Naive thymus-derived CD4-positive, alpha-beta T cell (primary cell): ENCODE measurements at regions of chr2 and their contacts with region 1.

Region 1: GRCh38 chr2:170928824-170929685 is at the start of gene GORASP2:
- DNase-seq: peak; percentile 97 to 99 (median 98)
- ATAC-seq: peak; percentile 94
- H3K4me3 ChIP-seq: peak within 1 kb of the TSS; percentile 88
- H3K4me3 Mint-ChIP-seq: peak within 1 kb of the TSS; percentile 89 to 97 (median 95)
- H3K27ac ChIP-seq: peak within 1 kb of the TSS; percentile 87
- H3K27ac Mint-ChIP-seq: peak within 1 kb of the TSS; percentile 93 to 96 (median 95)
- H3K4me1 ChIP-seq: peaks cover 18 to 32% of the 10 kb centered on the region in 2 donors
- H3K4me1 Mint-ChIP-seq: peaks cover 24 to 56% (median 48%) of the 10 kb centered on the region in 7 donors
- H3K27me3 ChIP-seq: no peaks in the 10 kb centered on the region
- H3K27me3 Mint-ChIP-seq: no peaks in the 10 kb centered on the region
- total RNA-seq, gene GORASP2: 65.2 to 79.2 (median 73.2) TPM

Region 2: GRCh38 chr2:169573160-169573973 is 1355.7 kb before region 1 on chr2 and contains the start of gene FASTKD1:
- CTCF ChIA-PET with region 1: no interaction called
- POLR2A ChIA-PET with region 1: no interaction called
- intact Hi-C with region 1: loop called (anchors 1 to 5 kb)
- DNase-seq: peak; percentile 55 to 88 (median 76)
- ATAC-seq: peak; percentile 100
- H3K4me3 ChIP-seq: peak within 1 kb of the TSS; percentile 93
- H3K4me3 Mint-ChIP-seq: peak within 1 kb of the TSS; percentile 88 to 99 (median 94)
- H3K27ac ChIP-seq: peak within 1 kb of the TSS; percentile 80
- H3K27ac Mint-ChIP-seq: peak within 1 kb of the TSS; percentile 74 to 95 (median 91)
- H3K4me1 ChIP-seq: peaks cover 4 to 5% of the 10 kb centered on the region in 2 donors
- H3K4me1 Mint-ChIP-seq: peaks cover 14 to 32% (median 24%) of the 10 kb centered on the region in 7 donors
- H3K27me3 ChIP-seq: no peaks in the 10 kb centered on the region
- H3K27me3 Mint-ChIP-seq: peaks cover 0 to 4% (median 0%) of the 10 kb centered on the region in 5 donors
- total RNA-seq, gene FASTKD1: 13.5 to 43.5 (median 31.0) TPM

Region 3: DNA sequence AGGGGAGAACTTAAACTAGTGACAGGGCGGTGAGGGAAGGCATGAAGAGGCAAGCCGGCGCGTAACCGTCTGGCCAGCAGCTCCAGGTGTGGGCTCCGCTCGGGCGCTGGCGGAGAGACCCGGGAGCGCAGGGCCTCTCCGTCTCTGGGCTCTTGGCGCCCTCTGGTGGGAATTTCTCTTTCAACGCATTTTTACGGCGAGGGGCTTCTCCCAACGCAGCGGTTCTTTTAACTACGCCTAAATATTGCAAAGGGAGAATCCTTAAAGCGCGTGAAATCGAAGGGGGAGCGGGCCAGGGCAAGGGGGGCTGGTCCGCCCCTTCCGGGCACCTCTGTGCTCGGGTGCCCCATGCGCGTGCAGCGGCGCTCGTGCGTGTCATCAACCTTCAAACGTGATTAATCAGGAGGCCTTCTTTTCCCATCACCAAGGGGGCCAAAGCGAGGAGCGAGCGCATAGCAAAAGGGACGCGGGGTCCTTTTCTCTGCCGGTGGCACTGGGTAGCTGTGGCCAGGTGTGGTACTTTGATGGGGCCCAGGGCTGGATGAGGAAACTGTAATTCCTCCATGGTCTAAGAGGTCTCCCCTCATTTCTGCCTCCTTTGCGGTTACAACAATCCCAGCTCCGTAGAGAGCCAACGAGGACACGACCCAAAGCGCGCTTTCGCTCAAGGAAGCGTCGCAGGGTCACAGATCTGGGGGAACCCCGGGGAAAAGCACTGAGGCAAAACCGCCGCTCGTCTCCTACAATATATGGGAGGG is 113.1 kb before region 1 on chr2:
- CTCF ChIA-PET with region 1: no interaction called
- POLR2A ChIA-PET with region 1: no interaction called
- intact Hi-C with region 1: loop called in 1 of 2 experiments (anchors 2 kb)
- DNase-seq: peak in 8 of 9 donors; percentile 33 to 70 (median 58)
- ATAC-seq: peak; percentile 68
- H3K4me3 ChIP-seq: peak overlapping the region; percentile 54
- H3K4me3 Mint-ChIP-seq: peak overlapping the region; percentile 59 to 86 (median 74)
- H3K27ac ChIP-seq: no peak overlapping the region
- H3K27ac Mint-ChIP-seq: peak overlapping the region in 2 of 9 donors; percentile 56 to 79
- H3K4me1 ChIP-seq: peaks cover 37 to 48% of the 10 kb centered on the region in 2 donors
- H3K4me1 Mint-ChIP-seq: peaks cover 30 to 78% (median 56%) of the 10 kb centered on the region in 7 donors
- H3K27me3 ChIP-seq: peaks cover 30 to 44% of the 10 kb centered on the region in 2 donors
- H3K27me3 Mint-ChIP-seq: peaks cover 67 to 84% (median 73%) of the 10 kb centered on the region in 5 donors

Region 4: DNA sequence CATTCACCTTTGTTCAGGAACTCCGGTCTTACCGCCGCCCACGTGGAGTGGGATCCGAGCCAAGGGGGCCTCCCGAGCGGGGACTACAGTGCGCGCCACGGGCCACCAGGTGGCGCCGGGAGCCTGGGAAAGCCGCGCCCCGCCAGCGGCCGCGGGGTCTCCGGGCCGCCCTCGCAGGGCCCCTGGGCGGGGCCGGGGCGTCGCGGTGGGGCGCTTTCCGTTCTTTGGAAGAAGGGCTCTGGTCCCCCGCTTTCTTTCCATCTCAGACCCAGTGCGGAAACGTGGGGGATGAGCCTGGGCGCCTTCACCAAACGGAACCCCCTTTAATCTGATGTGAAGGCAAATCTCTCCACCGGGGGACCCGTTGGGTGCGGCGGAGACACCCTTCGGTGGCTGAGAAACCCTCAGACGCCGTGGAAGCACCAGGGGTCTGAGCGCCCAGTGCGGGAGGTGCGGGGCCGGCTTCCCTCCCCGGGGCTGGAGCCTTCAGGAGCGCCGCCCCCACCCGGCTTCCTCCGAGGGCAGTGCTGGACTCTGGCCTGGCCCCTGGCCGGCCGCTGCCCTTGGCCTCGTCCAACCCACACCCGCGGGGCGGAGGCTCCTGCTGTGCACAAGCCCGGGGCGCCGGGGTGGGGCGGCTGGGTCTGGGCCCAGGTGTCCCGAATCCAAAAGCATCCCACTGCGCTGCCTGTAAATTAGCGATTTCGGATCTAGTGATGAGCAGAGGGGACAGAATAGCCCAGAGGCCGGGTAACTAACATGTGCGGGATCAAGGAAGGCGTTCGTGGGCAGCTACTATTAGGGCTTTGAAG is 44.6 kb after region 1 on chr2:
- CTCF ChIA-PET with region 1: interaction called, 6 read pairs
- POLR2A ChIA-PET with region 1: interaction called, 7 read pairs
- intact Hi-C with region 1: loop called (anchors 1 kb)
- DNase-seq: peak; percentile 86 to 96 (median 91)
- ATAC-seq: peak; percentile 99
- H3K4me3 ChIP-seq: peak overlapping the region; percentile 84
- H3K4me3 Mint-ChIP-seq: peak overlapping the region; percentile 51 to 87 (median 84)
- H3K27ac ChIP-seq: peak overlapping the region; percentile 67
- H3K27ac Mint-ChIP-seq: peak overlapping the region; percentile 33 to 90 (median 79)
- H3K4me1 ChIP-seq: peaks cover 4 to 11% of the 10 kb centered on the region in 2 donors
- H3K4me1 Mint-ChIP-seq: peaks cover 5 to 20% (median 10%) of the 10 kb centered on the region in 7 donors
- H3K27me3 ChIP-seq: no peaks in the 10 kb centered on the region
- H3K27me3 Mint-ChIP-seq: no peaks in the 10 kb centered on the region

Region 5: GRCh38 chr2:171433763-171434670 is 505.0 kb after region 1 on chr2 and contains the starts of genes DCAF17 and METTL8:
- CTCF ChIA-PET with region 1: interaction called, 8 read pairs
- POLR2A ChIA-PET with region 1: interaction called, 20 read pairs
- intact Hi-C with region 1: loop called (anchors 1 kb)
- DNase-seq: peak; percentile 84 to 93 (median 91)
- ATAC-seq: peak; percentile 95
- H3K4me3 ChIP-seq: peak within 1 kb of the TSS; percentile 87
- H3K4me3 Mint-ChIP-seq: peak within 1 kb of the TSS; percentile 82 to 97 (median 90)
- H3K27ac ChIP-seq: peak within 1 kb of the TSS; percentile 92
- H3K27ac Mint-ChIP-seq: peak within 1 kb of the TSS; percentile 84 to 98 (median 95)
- H3K4me1 ChIP-seq: peaks cover 15 to 28% of the 10 kb centered on the region in 2 donors
- H3K4me1 Mint-ChIP-seq: peaks cover 30 to 56% (median 51%) of the 10 kb centered on the region in 7 donors
- H3K27me3 ChIP-seq: no peaks in the 10 kb centered on the region
- H3K27me3 Mint-ChIP-seq: no peaks in the 10 kb centered on the region
- total RNA-seq, gene DCAF17: 19.0 to 40.3 (median 23.7) TPM
- total RNA-seq, gene METTL8: 11.8 to 21.6 (median 14.8) TPM

Region 6: GRCh38 chr2:172102391-172103278 is 1173.6 kb after region 1 on chr2 and contains the start of gene DLX2:
- CTCF ChIA-PET with region 1: no interaction called
- POLR2A ChIA-PET with region 1: no interaction called
- intact Hi-C with region 1: loop called in 1 of 2 experiments (anchors 1 kb)
- DNase-seq: peak in 5 of 9 donors; percentile 23 to 43 (median 32)
- ATAC-seq: peak; percentile 61
- H3K4me3 ChIP-seq: peak within 1 kb of the TSS; percentile 32
- H3K4me3 Mint-ChIP-seq: peak within 1 kb of the TSS; percentile 74 to 88 (median 82)
- H3K27ac ChIP-seq: no peak within 1 kb of the TSS
- H3K27ac Mint-ChIP-seq: peak within 1 kb of the TSS in 8 of 9 donors; percentile 11 to 89 (median 80)
- H3K4me1 ChIP-seq: peaks cover 41 to 62% of the 10 kb centered on the region in 2 donors
- H3K4me1 Mint-ChIP-seq: peaks cover 29 to 59% (median 49%) of the 10 kb centered on the region in 7 donors
- H3K27me3 ChIP-seq: peaks cover 48 to 83% of the 10 kb centered on the region in 2 donors
- H3K27me3 Mint-ChIP-seq: peaks cover 65 to 91% (median 70%) of the 10 kb centered on the region in 5 donors
- total RNA-seq, gene DLX2: 0.16 to 0.34 TPM in 2 of 5 experiments, not detected in the others